ENCODE measurements at regions of chrX and their contacts with region 1.

Region 1: GRCh38 chrX:34656842-34657725 is at the start of gene TMEM47:
- DNase-seq: peak; percentile 70
- ATAC-seq: peak; percentile 95
- H3K4me3 ChIP-seq: peak within 1 kb of the TSS; percentile 99
- H3K27ac ChIP-seq: peak within 1 kb of the TSS; percentile 90
- H3K4me1 ChIP-seq: no peaks in the 10 kb centered on the region
- H3K27me3 ChIP-seq: no peaks in the 10 kb centered on the region
- CTCF ChIP-seq: no peak
- POLR2A ChIP-seq: peak; percentile 81
- RAD21 ChIP-seq: no peak
- total RNA-seq, gene TMEM47: 105 and 134 TPM in 2 replicates

Region 2: GRCh38 chrX:34521563-34521962 is 135.5 kb before region 1 on chrX:
- CTCF ChIA-PET with region 1: no interaction called
- POLR2A ChIA-PET with region 1: no interaction called
- dilution Hi-C with region 1: no loop called
- in situ Hi-C with region 1: no loop called
- intact Hi-C with region 1: no loop called
- DNase-seq: peak; percentile 2
- ATAC-seq: no peak
- H3K4me3 ChIP-seq: no peak overlapping the region
- H3K27ac ChIP-seq: no peak overlapping the region
- H3K4me1 ChIP-seq: no peaks in the 10 kb centered on the region
- H3K27me3 ChIP-seq: no peaks in the 10 kb centered on the region
- CTCF ChIP-seq: no peak
- POLR2A ChIP-seq: no peak
- RAD21 ChIP-seq: no peak

Region 3: DNA sequence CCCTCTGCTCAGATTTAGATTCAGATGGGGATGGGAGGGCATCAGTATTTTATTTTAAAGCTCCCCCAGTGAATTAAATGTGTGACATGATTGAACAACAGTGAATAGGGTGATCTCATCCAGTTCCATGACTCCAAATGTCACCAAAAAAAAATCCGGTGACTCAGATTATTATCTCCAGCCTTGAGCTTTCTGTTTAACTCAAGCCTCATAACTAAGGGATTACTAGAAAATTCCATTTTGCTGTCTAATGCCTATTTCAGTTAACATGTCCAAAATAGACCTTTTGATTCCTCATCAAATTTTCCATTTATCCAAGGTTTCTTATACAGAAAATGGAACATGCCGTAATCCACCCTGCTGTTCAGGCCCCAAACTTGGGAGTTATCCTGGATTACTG is 121.9 kb after region 1 on chrX:
- CTCF ChIA-PET with region 1: no interaction called
- POLR2A ChIA-PET with region 1: no interaction called
- dilution Hi-C with region 1: no loop called
- in situ Hi-C with region 1: no loop called
- intact Hi-C with region 1: loop called (anchors 2 kb)
- DNase-seq: peak; percentile 86
- ATAC-seq: peak; percentile 91
- H3K4me3 ChIP-seq: no peak overlapping the region
- H3K27ac ChIP-seq: no peak overlapping the region
- H3K4me1 ChIP-seq: peaks cover 5% of the 10 kb centered on the region; the same call in 1 of the 2 replicates
- H3K27me3 ChIP-seq: no peaks in the 10 kb centered on the region
- CTCF ChIP-seq: no peak
- POLR2A ChIP-seq: no peak
- RAD21 ChIP-seq: no peak

Region 4: DNA sequence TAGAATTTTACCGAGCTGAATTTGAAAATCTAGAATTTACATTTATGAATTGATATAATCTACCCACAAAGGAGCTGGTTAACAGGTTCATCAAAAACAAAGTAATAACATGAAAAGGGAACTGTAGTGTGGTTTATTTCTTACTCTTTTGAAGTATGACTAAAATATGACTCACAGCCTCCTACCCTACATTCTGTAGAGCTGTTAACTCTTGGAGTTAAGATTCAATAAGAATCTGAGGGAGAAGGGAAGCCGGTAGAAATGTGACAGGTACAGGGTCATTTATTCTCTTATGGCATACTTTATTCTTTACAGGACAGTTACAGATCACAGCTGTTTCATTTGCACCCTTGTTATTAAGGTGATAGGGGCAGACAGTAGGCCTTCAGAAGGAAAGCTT is 153.3 kb after region 1 on chrX:
- CTCF ChIA-PET with region 1: no interaction called
- POLR2A ChIA-PET with region 1: no interaction called
- dilution Hi-C with region 1: no loop called
- in situ Hi-C with region 1: no loop called
- intact Hi-C with region 1: loop called (anchors 10 kb)
- DNase-seq: peak; percentile 60
- ATAC-seq: peak; percentile 82
- H3K4me3 ChIP-seq: peak overlapping the region; percentile 18; the same call in 1 of the 2 replicates
- H3K27ac ChIP-seq: no peak overlapping the region
- H3K4me1 ChIP-seq: peaks cover 3% of the 10 kb centered on the region; the same call in 1 of the 2 replicates
- H3K27me3 ChIP-seq: no peaks in the 10 kb centered on the region
- CTCF ChIP-seq: no peak
- POLR2A ChIP-seq: no peak
- RAD21 ChIP-seq: no peak

Region 5: DNA sequence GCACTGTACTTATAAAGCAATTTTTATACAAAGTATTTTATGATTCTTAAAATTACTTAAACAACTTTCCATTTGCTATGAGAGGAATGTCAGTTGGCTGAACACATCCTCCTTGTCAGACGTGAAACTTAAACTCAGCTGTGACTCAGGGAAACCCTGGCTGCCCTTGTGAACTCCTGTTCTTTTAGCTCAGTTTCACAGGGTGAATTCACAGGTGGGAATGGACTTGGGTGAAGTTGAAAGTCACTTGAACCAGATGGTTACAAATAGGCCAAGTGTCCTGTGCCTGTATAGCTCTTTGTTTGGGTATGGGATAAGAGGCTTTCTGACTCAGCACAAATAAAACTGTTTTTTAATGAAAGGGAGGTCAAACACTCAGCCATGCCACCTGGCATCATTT is 218.1 kb after region 1 on chrX:
- CTCF ChIA-PET with region 1: no interaction called
- POLR2A ChIA-PET with region 1: no interaction called
- dilution Hi-C with region 1: no loop called
- in situ Hi-C with region 1: no loop called
- intact Hi-C with region 1: loop called (anchors 2 kb)
- DNase-seq: peak; percentile 75
- ATAC-seq: peak; percentile 50
- H3K4me3 ChIP-seq: no peak overlapping the region
- H3K27ac ChIP-seq: peak overlapping the region; percentile 56; the same call in 1 of the 2 replicates
- H3K4me1 ChIP-seq: peaks cover 4% of the 10 kb centered on the region
- H3K27me3 ChIP-seq: no peaks in the 10 kb centered on the region
- CTCF ChIP-seq: no peak
- POLR2A ChIP-seq: no peak
- RAD21 ChIP-seq: no peak

Region 6: DNA sequence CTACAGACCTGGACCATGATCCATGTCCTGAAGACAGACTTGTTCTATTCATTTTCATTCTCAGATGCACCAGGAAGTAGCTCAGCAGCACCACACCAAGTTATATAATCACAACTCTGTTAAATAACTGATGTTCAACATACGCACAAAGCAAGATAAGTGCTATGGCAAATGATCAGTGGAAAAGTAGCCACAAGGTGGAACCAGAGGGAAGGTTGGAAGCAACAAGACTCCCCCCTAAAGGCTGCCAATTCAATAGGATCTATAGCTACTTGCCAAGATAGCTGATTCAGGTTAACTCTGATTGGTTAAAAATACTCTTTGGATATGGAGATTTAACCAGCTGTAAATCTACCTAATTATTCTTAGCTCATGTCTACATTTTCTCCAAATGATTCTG is 261.8 kb after region 1 on chrX:
- CTCF ChIA-PET with region 1: no interaction called
- POLR2A ChIA-PET with region 1: no interaction called
- dilution Hi-C with region 1: no loop called
- in situ Hi-C with region 1: no loop called
- intact Hi-C with region 1: loop called (anchors 2 kb)
- DNase-seq: peak; percentile 75
- ATAC-seq: peak; percentile 44
- H3K4me3 ChIP-seq: no peak overlapping the region
- H3K27ac ChIP-seq: no peak overlapping the region
- H3K4me1 ChIP-seq: no peaks in the 10 kb centered on the region
- H3K27me3 ChIP-seq: no peaks in the 10 kb centered on the region
- CTCF ChIP-seq: peak; percentile 53
- POLR2A ChIP-seq: no peak
- RAD21 ChIP-seq: peak; percentile 68

Region 7: DNA sequence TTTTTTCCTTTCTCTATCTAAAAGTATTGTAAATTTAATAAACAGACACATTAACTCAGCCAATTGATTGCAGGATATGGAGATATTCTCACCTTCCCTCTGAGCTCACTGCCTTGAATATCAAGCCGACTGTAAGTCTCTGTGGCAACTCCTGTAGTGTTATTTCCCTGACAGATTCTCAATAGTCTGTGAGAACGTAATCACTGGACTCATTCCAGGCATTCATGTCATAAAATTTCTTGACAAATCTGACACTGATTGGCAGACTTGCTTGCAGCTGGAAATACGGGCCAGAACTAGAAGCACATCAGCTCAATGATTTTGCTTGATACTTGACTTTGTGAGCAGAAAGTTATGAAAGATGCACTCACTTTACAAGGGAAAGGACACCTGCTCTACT is 315.1 kb after region 1 on chrX:
- CTCF ChIA-PET with region 1: no interaction called
- POLR2A ChIA-PET with region 1: no interaction called
- dilution Hi-C with region 1: no loop called
- in situ Hi-C with region 1: no loop called
- intact Hi-C with region 1: no loop called
- DNase-seq: no peak
- ATAC-seq: no peak
- H3K4me3 ChIP-seq: no peak overlapping the region
- H3K27ac ChIP-seq: no peak overlapping the region
- H3K4me1 ChIP-seq: no peaks in the 10 kb centered on the region
- H3K27me3 ChIP-seq: no peaks in the 10 kb centered on the region; the same call in 1 of the 2 replicates
- CTCF ChIP-seq: no peak
- POLR2A ChIP-seq: no peak
- RAD21 ChIP-seq: no peak

Region 8: DNA sequence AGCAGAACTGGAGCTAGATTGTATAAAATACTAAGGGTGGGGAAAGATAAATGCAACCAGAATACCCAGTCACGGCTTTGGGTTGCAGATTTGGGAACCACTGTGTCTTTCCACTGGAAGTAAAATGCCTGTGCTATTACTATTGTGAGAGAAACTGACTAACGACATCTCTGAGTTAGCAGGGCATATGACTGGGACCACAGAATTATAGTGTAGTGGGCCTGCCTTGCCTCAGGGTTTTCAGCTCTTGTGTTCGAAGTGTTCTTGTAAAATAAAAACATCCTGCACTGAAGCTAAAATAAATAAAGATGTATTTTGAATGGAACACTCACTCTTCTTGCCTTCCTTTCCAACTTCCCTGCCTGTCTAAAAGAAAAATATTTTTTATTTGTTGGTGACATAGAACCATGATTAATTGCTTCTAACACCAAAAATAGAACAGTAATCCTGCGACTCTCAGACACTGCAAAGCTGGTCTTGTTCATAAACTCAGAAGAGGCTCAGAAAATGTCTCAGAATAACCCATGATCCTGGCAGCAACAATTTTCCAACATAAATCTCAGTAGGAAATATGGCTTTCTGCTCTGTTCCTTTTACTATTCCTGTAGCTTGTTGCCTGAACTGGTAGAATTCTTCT is 389.7 kb after region 1 on chrX:
- CTCF ChIA-PET with region 1: no interaction called
- POLR2A ChIA-PET with region 1: no interaction called
- dilution Hi-C with region 1: no loop called
- in situ Hi-C with region 1: no loop called
- intact Hi-C with region 1: no loop called
- DNase-seq: no peak
- ATAC-seq: no peak
- H3K4me3 ChIP-seq: no peak overlapping the region
- H3K27ac ChIP-seq: no peak overlapping the region
- H3K4me1 ChIP-seq: no peaks in the 10 kb centered on the region
- H3K27me3 ChIP-seq: no peaks in the 10 kb centered on the region
- CTCF ChIP-seq: no peak
- POLR2A ChIP-seq: no peak
- RAD21 ChIP-seq: no peak

Region 9: DNA sequence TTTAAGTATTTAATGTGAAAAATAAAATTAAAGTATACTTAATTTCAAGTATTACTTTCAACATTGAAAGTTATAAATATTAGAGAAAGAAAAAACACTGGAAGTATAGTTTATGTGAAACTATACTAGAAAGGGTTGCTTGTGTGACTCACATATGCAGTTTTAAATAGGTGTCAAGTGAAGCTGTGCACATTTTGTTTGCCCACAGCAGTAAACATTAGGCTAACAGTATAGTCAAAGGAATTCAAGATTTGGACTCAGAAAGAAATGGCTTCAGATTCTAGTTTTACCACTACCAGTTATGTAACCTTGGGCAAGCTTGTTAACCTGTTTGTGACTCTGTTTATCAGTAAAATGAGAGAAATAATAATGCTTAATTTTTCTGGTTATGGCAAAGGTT is 433.7 kb after region 1 on chrX:
- CTCF ChIA-PET with region 1: no interaction called
- POLR2A ChIA-PET with region 1: no interaction called
- dilution Hi-C with region 1: no loop called
- in situ Hi-C with region 1: no loop called
- intact Hi-C with region 1: loop called (anchors 5 kb)
- DNase-seq: peak; percentile 55
- ATAC-seq: peak; percentile 75
- H3K4me3 ChIP-seq: no peak overlapping the region
- H3K27ac ChIP-seq: no peak overlapping the region
- H3K4me1 ChIP-seq: no peaks in the 10 kb centered on the region
- H3K27me3 ChIP-seq: no peaks in the 10 kb centered on the region
- CTCF ChIP-seq: no peak
- POLR2A ChIP-seq: no peak
- RAD21 ChIP-seq: no peak